ENCODE measurements at regions of chr16 and their contacts with region 1.

Region 1: DNA sequence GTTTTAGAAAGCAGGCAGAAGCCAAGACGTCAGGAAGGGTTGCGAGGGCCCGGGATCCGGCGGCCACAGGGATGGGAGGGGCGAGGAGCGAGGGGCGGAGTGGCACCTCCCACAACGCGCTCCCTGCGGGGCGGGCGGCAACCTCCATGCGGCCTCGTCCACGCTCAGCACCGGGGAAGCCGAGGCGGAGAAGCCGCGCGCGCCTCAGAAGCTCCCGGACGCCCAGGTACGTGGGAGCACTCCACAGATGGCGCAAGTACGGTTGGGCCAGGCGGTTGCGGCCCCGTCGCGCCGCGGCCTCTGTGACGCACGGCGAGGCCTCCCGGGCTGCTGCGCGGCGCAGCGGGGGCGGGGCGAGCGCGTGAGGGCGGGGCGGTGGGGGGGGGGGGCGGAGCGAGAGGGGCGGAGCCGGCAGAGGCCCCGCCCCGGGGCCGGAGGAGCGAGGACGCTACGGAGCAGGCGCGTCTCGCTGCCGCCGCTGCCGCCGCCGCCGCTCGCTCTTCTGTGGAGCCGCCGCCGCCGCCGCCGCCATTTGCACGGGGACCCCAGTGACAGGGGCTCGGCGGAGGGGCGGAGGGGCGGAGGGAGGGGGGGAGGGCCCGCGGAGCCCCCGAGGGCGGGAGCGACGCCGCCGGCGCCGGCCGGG is at the start of gene TENT4B:
- DNase-seq: peak; percentile 94
- ATAC-seq: peak; percentile 82
- H3K4me3 Mint-ChIP-seq: peak within 1 kb of the TSS; percentile 88
- H3K27ac Mint-ChIP-seq: peak within 1 kb of the TSS; percentile 94
- H3K4me1 Mint-ChIP-seq: peaks cover 36% of the 10 kb centered on the region
- H3K27me3 Mint-ChIP-seq: no peaks in the 10 kb centered on the region
- CTCF ChIP-seq: no peak
- total RNA-seq, gene TENT4B: 13.0 and 13.2 TPM in 2 replicates

Region 2: DNA sequence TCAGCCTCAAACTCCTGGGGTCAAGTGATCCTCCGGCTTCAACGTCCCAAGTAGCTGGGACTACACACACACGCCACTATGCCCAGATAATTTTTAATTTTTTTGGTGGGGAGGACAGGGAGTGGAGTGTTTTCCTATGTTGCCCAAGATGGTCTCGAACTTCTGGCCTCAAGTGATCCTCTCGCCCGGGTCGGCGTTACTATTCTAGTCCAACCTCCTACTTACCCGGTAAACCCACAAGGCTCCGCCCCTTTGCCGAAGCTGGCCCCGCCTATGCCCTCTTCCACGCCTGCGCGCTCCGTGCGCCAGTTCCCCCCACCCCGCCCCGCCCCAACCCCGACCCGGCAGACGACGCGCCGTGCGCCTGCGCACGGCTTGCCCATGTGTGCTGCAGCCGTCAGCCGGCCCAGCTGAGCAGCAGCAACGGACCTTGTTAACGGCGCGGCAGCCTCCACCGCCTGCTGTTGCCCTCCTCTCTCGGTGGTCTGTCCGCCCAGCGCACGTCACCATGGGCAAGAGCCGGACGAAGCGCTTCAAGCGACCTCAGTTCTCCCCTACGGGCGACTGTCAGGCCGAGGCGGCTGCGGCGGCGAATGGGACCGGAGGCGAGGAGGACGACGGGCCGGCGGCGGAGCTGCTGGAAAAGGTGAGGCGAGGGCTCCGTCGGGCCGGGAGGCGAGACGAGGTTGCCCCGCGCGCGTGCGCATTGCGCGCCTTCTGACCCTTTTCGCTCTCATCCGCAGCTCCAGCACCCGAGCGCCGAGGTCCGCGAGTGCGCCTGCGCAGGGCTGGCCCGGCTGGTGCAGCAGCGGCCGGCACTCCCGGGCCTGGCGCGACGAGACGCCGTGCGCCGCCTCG is 87.1 kb before region 1 on chr16 and contains the start of gene HEATR3:
- CTCF ChIA-PET with region 1: no interaction called
- POLR2A ChIA-PET with region 1: interaction called, 17 read pairs
- intact Hi-C with region 1: loop called (anchors 1 kb)
- DNase-seq: peak; percentile 92
- ATAC-seq: peak; percentile 85
- H3K4me3 Mint-ChIP-seq: peak within 1 kb of the TSS; percentile 90
- H3K27ac Mint-ChIP-seq: peak within 1 kb of the TSS; percentile 90
- H3K4me1 Mint-ChIP-seq: peaks cover 31% of the 10 kb centered on the region
- H3K27me3 Mint-ChIP-seq: no peaks in the 10 kb centered on the region
- CTCF ChIP-seq: no peak
- total RNA-seq, gene HEATR3: 16.1 and 17.8 TPM in 2 replicates

Region 3: DNA sequence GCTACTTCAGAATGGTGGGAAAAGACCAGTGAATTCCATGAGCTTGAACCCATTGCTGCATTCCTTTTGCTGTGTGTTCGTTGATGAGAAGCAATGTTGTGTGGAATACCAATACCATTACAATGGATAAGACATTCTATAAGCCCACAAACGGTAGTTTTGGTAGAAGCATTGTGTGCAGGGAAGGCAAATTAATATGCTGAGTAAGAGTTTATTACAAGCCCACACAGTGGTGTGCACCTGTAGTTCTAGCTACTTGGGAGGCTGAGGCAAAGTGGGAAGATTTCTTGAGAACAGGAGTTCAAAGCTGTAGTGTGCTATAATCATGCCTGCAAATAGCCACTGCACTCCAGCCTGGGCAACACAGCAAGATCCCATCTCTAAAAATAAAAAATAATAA is 19.7 kb before region 1 on chr16:
- CTCF ChIA-PET with region 1: no interaction called
- POLR2A ChIA-PET with region 1: no interaction called
- intact Hi-C with region 1: no loop called
- DNase-seq: no peak
- ATAC-seq: no peak
- H3K4me3 Mint-ChIP-seq: no peak overlapping the region
- H3K27ac Mint-ChIP-seq: no peak overlapping the region
- H3K4me1 Mint-ChIP-seq: no peaks in the 10 kb centered on the region
- H3K27me3 Mint-ChIP-seq: no peaks in the 10 kb centered on the region
- CTCF ChIP-seq: no peak

Region 4: GRCh38 chr16:50172195-50172922 is 19.4 kb after region 1 on chr16:
- CTCF ChIA-PET with region 1: no interaction called
- POLR2A ChIA-PET with region 1: no interaction called
- intact Hi-C with region 1: loop called (anchors 2 kb)
- DNase-seq: no peak
- ATAC-seq: no peak
- H3K4me3 Mint-ChIP-seq: no peak overlapping the region
- H3K27ac Mint-ChIP-seq: no peak overlapping the region
- H3K4me1 Mint-ChIP-seq: peaks cover 46% of the 10 kb centered on the region
- H3K27me3 Mint-ChIP-seq: no peaks in the 10 kb centered on the region
- CTCF ChIP-seq: no peak

Region 5: DNA sequence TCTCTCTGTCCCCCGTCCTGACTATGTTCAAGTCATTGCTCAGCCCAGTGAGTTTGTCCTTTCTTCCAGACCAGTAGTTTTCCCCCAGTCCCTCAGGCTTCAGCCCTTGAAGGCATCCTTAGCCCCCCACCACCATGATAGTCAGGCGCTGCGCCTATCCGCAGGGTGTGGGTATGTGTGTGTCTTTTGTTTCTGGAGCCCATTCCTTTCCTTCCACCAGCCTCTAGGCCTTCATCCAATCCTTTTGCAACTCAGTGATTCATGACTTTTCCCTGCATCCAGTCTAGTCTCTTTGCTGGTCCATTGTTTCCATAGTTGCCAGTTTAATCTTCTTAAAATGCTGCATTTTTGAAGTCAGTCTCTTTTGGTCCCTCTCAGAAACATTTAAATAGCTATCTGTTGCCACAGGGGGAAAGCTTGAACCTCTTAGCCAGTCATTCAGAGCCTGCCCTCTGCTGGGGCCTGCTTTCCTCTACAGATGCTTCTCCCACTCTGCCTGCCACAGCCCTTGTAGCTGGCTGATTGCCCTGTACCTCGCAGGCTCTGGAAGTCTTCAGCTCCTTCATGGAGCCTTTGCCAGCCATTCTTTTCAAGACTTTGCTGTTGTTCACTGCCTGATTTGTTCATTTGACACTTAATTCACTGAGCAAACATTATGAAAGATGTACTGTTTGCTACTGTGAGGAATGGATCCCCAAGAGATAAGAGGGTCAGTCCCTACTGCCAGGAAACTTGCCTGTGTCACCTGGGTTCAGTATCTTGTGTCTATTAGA is 57.5 kb after region 1 on chr16:
- CTCF ChIA-PET with region 1: interaction called, 11 read pairs
- POLR2A ChIA-PET with region 1: interaction called, 6 read pairs
- intact Hi-C with region 1: loop called (anchors 1 kb)
- DNase-seq: no peak
- ATAC-seq: peak; percentile 83
- H3K4me3 Mint-ChIP-seq: no peak overlapping the region
- H3K27ac Mint-ChIP-seq: peak overlapping the region; percentile 59
- H3K4me1 Mint-ChIP-seq: peaks cover 35% of the 10 kb centered on the region
- H3K27me3 Mint-ChIP-seq: no peaks in the 10 kb centered on the region
- CTCF ChIP-seq: no peak

Region 6: GRCh38 chr16:50368410-50369132 is 215.6 kb after region 1 on chr16 and contains the start of gene BRD7:
- CTCF ChIA-PET with region 1: no interaction called
- POLR2A ChIA-PET with region 1: no interaction called
- intact Hi-C with region 1: loop called (anchors 1 kb)
- DNase-seq: peak; percentile 79
- ATAC-seq: peak; percentile 89
- H3K4me3 Mint-ChIP-seq: peak within 1 kb of the TSS; percentile 92
- H3K27ac Mint-ChIP-seq: peak within 1 kb of the TSS; percentile 90
- H3K4me1 Mint-ChIP-seq: peaks cover 47% of the 10 kb centered on the region
- H3K27me3 Mint-ChIP-seq: peaks cover 4% of the 10 kb centered on the region
- CTCF ChIP-seq: no peak
- total RNA-seq, gene BRD7: 60.3 and 65.2 TPM in 2 replicates

Region 7: GRCh38 chr16:50665128-50665878 is 512.4 kb after region 1 on chr16:
- CTCF ChIA-PET with region 1: no interaction called
- POLR2A ChIA-PET with region 1: no interaction called
- intact Hi-C with region 1: loop called (anchors 5 kb)
- DNase-seq: peak; percentile 68
- ATAC-seq: peak; percentile 70
- H3K4me3 Mint-ChIP-seq: peak overlapping the region; percentile 81
- H3K27ac Mint-ChIP-seq: peak overlapping the region; percentile 65
- H3K4me1 Mint-ChIP-seq: peaks cover 23% of the 10 kb centered on the region
- H3K27me3 Mint-ChIP-seq: no peaks in the 10 kb centered on the region
- CTCF ChIP-seq: no peak

Region 8: GRCh38 chr16:50741808-50742575 is 589.1 kb after region 1 on chr16 and contains the start of gene CYLD:
- CTCF ChIA-PET with region 1: no interaction called
- POLR2A ChIA-PET with region 1: interaction called, 3 read pairs
- intact Hi-C with region 1: loop called (anchors 2 kb)
- DNase-seq: peak; percentile 96
- ATAC-seq: peak; percentile 87
- H3K4me3 Mint-ChIP-seq: peak within 1 kb of the TSS; percentile 91
- H3K27ac Mint-ChIP-seq: peak within 1 kb of the TSS; percentile 96
- H3K4me1 Mint-ChIP-seq: peaks cover 58% of the 10 kb centered on the region
- H3K27me3 Mint-ChIP-seq: no peaks in the 10 kb centered on the region
- CTCF ChIP-seq: no peak
- total RNA-seq, gene CYLD: 116 and 122 TPM in 2 replicates

Measured in activated B cell treated with CpG ODN at 0.5 μM for 24 hours (primary cell).